Dorsolateral prefrontal cortex (tissue), 120 donors: ENCODE measurements at regions of chr5 and their contacts with region 1.

Region 1: DNA sequence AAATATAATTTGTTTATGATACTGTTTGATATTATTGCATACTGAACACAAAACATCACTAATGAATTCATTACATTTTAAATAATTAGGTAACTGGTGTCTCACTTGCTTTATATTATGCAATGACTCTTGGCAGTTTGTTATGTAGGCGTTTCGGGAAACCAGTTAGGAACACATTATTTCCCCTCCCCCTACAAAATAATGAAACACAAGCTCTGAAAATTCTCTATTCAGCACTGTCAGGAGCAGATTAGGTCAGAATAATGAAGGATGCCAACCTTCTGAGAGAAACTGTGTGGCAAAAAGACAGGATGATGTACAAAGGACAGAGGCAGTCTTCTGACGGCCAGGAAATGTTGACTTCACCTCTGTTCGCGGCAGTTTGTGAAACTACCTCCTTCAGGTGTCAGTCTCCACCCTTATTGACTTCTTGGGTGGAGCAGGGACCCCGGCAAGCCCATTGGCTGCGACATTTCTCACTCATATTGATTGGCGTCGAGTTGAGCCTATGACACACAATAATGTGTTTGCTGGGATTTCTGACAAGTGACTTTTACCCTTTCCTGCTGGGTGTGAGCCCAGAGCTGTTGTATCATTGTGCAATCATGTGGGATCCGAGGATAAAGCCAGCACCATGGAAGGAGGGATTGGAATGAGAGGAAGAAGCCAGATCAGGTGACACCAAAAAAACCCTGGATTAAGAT is 33.9 kb downstream of the SH3PXD2B start:
- DNase-seq: peak in 9 of 10 donors; percentile 59 to 90 (median 70)
- H3K4me3 ChIP-seq: peak overlapping the region in 29 of 59 donors; percentile 1 to 56 (median 30)
- H3K27ac ChIP-seq: peak overlapping the region; percentile 64 to 97 (median 89)
- H3K27me3 ChIP-seq: no peaks in the 10 kb centered on the region
- CTCF ChIP-seq: no peak

Region 2: DNA sequence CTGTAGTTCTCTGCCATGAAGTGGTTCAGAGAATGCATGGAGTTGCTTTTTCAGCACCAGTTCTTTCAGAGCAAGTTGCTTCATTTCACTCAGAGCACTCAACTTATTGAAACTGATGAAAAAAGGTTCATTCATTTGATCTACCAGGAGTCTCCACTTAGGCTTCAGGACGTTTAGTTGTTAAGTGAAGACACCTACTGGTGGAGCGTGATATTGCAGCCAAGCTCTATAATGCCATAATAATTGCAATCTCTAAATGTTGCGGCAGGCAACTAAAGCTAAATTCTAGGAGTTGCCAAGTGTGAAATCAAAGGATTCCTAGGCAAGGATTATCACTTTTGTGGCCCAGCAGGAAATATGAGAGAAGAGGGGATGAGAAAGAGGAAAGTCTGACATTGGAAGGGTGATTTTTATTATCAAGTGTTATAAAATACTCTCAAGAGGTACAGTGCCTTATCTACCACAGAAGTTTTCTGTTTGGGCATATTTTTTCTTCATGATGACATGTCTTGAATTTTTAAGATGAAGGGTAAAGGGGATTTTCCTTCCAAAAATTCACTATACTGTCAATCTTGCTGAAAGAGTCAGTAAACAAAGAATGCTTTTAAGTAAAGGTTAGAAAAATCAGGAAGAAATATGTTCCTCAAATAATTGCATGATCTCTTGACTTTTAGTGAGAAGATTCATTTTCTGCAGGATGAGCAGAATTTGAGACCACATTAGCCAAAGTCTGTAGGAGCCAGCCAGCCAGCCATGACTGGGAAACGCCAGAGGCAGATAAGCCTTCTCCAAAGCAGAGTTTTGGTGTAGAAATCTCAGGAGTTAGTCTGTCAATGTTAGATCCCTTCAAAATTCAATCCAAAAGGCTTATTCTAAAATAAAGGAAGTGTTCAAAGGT is 49.5 kb before region 1 on chr5:
- intact Hi-C with region 1: loop called in 1 of 2 experiments (anchors 5 kb)
- DNase-seq: peak in 1 of 10 donors; percentile 59
- H3K4me3 ChIP-seq: no peak overlapping the region
- H3K27ac ChIP-seq: peak overlapping the region in 8 of 59 donors; percentile 8 to 63 (median 27)
- H3K27me3 ChIP-seq: no peaks in the 10 kb centered on the region
- CTCF ChIP-seq: peak in 49 of 56 donors; percentile 22 to 63 (median 43)

Region 3: GRCh38 chr5:172403189-172403796 is 17.1 kb before region 1 on chr5:
- intact Hi-C with region 1: loop called in 1 of 2 experiments (anchors 2 kb)
- DNase-seq: peak; percentile 56 to 84 (median 80)
- H3K4me3 ChIP-seq: peak overlapping the region in 16 of 59 donors; percentile 1 to 47 (median 22)
- H3K27ac ChIP-seq: peak overlapping the region; percentile 55 to 95 (median 87)
- H3K27me3 ChIP-seq: no peaks in the 10 kb centered on the region
- CTCF ChIP-seq: peak in 28 of 56 donors; percentile 11 to 57 (median 28)

Region 4: GRCh38 chr5:172437445-172438308 is 17.3 kb after region 1 on chr5:
- intact Hi-C with region 1: loop called in 1 of 2 experiments (anchors 2 kb)
- DNase-seq: peak in 3 of 10 donors; percentile 53 to 68 (median 55)
- H3K4me3 ChIP-seq: peak overlapping the region in 12 of 59 donors; percentile 0 to 31 (median 14)
- H3K27ac ChIP-seq: peak overlapping the region; percentile 18 to 97 (median 87)
- H3K27me3 ChIP-seq: no peaks in the 10 kb centered on the region
- CTCF ChIP-seq: peak in 2 of 56 donors; percentile 8 to 13

Region 5: DNA sequence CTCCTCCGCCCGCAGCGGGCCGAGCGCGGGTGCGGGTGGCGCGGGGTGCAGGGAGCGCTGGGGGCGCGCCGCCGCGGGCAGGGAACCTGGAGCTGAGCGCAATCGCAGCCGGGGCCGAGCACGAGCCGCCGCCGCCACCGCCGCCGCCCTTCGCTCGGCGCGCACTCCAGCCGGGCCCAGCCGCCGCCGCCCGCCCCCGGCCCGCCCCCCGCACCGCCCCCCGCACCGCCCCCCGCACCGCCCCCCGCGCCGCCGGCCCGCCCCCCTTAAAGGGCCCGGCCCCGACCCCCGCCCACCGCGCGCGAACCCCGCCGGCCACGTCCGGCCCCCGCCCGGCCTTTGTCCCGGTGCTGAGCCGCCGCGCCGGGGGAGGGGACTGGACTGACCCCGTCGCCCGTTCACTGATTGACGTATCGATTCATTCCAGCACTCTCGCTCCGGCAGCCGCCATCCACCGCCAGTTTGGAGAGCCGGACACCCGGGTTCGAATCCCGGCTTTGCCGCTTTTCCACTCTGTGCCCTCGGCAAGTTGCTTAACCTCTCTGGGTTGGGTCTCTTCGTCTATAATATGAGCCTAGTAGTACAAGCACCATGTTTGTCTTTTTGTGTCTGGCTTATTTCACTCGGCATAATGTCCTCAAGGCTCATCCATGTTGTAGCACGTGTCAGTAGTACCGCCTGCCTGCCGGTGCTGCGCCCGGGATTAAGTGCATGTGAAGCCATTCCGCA is 34.1 kb after region 1 on chr5 and contains the start of gene SH3PXD2B:
- intact Hi-C with region 1: loop called in 1 of 2 experiments (anchors 2 kb)
- DNase-seq: peak in 6 of 10 donors; percentile 46 to 79 (median 62)
- H3K4me3 ChIP-seq: peak within 1 kb of the TSS; percentile 61 to 94 (median 79)
- H3K27ac ChIP-seq: peak within 1 kb of the TSS; percentile 29 to 95 (median 86)
- H3K27me3 ChIP-seq: no peaks in the 10 kb centered on the region
- CTCF ChIP-seq: no peak
- total RNA-seq, gene SH3PXD2B: 9.2 to 63.2 (median 19.7) TPM